ENCODE measurements at regions of chr9 and their contacts with region 1.

Region 1: DNA sequence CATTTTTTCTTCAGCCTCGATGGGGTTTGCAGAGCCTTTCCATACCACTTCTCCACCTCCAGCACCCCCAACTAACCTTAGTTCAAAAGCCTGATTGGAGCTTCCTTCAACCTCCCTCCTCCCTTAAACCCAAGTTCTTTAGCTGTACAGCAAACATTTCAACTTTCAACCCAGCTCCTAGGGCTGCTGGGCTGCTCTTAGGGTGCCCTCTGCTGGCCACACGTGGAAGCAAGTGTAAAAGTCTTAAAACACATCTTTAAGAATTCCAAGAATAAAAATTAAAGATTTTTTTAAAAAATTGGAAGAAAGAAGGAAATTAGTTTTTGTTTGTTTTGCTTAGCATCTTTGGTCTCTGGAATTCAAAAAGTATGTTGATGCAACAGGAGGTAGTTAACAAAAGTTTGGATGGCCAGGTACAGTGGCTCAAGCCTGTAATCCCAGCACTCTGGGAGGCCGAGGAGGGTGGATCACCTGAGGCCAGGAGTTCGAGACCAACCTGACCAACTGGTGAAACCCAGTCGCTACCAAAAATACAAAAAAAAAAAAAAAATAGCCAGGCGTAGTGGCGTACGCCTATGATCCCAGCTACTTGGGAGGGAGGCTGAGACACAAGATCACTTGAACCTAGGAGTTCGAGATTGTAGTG is 15.5 kb upstream of the HSD17B3 start:
- DNase-seq: peak in 2 of 5 donors; percentile 20 to 36
- ATAC-seq: peak in 3 of 4 donors; percentile 59 to 71 (median 62)
- H3K4me3 ChIP-seq: no peak overlapping the region
- H3K27ac ChIP-seq: no peak overlapping the region
- H3K4me1 ChIP-seq: peaks cover 0 to 4% (median 0%) of the 10 kb centered on the region in 12 donors
- H3K27me3 ChIP-seq: no peaks in the 10 kb centered on the region
- CTCF ChIP-seq: peak; percentile 62 to 92 (median 86)
- POLR2A ChIP-seq: no peak

Region 2: DNA sequence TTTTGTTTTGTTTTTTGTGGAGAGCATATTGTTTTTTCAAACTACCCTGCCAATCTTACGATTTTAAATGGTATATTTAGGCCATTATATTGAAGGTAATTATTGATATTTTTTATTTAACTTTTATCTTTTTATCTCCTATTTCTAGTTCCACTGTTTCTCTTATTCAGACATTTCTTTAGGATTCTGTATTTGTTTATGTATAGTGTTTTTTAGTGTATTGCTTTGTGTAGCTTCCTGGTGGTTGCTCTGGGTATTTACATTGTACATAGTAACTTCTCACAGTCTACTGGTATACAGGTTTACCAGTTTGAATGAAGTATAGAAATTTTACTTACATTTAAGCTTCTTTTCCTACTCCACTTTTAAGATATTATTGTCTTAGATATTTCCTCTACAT is 378.7 kb before region 1 on chr9:
- intact Hi-C with region 1: loop called in 1 of 10 experiments (anchors 10 kb)
- DNase-seq: no peak
- ATAC-seq: no peak
- H3K4me3 ChIP-seq: no peak overlapping the region
- H3K27ac ChIP-seq: no peak overlapping the region
- H3K4me1 ChIP-seq: no peaks in the 10 kb centered on the region
- H3K27me3 ChIP-seq: no peaks in the 10 kb centered on the region
- CTCF ChIP-seq: peak in 2 of 12 donors; percentile 22 to 44
- POLR2A ChIP-seq: no peak